ENCODE measurements at regions of chr19 and their contacts with region 1.

Region 1: DNA sequence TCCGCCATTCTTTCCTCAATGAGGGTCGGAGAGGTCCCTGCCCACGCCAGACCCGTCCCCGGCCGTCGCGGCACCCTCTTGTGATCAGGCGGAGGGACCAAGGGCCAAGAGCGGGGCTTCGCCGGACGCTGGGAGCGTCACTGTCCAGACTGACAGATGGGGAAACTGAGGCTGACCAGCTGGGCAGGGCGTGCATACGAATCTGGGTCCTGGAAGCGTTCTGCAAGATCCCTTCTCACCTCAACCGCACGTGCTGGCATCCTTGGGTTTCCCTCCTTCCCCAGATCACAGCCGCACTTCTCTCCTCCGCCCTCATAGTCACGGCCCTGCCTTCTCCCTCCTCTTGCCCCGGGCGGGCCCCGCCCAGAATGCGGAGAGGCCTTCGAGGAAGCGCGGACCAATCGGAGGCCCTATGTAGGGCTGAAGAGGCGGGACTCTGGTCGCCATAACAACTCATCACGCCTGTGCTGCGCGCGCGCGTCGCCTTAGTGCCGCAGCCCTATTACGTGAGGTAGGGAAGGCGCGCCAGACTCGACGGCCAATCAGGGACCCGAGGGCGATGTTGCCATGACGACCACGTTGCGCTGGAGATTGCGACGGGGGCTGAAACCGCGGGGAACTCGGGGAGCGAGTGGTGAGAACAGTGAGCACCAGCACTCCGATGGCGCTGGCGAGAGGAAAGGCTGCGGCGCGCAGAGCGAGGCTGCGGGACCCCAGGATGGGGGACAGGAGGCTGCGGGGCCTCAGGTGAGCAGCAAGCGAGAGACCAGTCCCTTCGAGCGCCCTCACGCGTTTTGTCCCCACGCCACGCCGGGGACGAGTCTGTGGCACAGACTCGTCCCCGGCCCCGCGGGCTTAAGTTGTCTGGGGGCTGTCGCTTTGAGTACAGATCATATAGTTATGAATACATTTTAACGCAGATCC is 5.7 kb downstream of the RNF225 start:
- DNase-seq: peak; percentile 97
- H3K4me3 ChIP-seq: peak overlapping the region; percentile 75 to 84 (median 78)
- H3K27ac ChIP-seq: no peak overlapping the region
- H3K4me1 ChIP-seq: peaks cover 0 to 17% (median 11%) of the 10 kb centered on the region in 4 experiments; a peak in 4 of 7 replicates
- H3K27me3 ChIP-seq: peaks cover 3 to 17% (median 11%) of the 10 kb centered on the region in 4 experiments; a peak in 6 of 7 replicates
- CTCF ChIP-seq: no peak
- EP300 ChIP-seq: no peak
- POLR2A ChIP-seq: peak in 1 of 2 experiments; percentile 69; a peak in 1 of 3 replicates
- RAD21 ChIP-seq: no peak

Region 2: GRCh38 chr19:58386576-58387337 is 14.4 kb before region 1 on chr19 and contains the start of gene RPS5:
- CTCF ChIA-PET with region 1: interaction called, 3 read pairs
- POLR2A ChIA-PET with region 1: interaction called, 78 read pairs
- DNase-seq: peak; percentile 93 to 95
- H3K4me3 ChIP-seq: peak within 1 kb of the TSS; percentile 82 to 99 (median 92)
- H3K27ac ChIP-seq: peak within 1 kb of the TSS; percentile 94
- H3K4me1 ChIP-seq: peaks cover 0 to 15% (median 9%) of the 10 kb centered on the region in 4 experiments; a peak in 6 of 7 replicates
- H3K27me3 ChIP-seq: no peaks in the 10 kb centered on the region
- CTCF ChIP-seq: no peak
- EP300 ChIP-seq: no peak
- POLR2A ChIP-seq: peak; percentile 53 to 93
- RAD21 ChIP-seq: no peak; a peak in 1 of 4 replicates
- total RNA-seq, gene RPS5: 1,554 and 1,557 TPM in 2 replicates